ENCODE measurements at regions of chr12 and their contacts with region 1.

Region 1: GRCh38 chr12:503111-503761 is 43.5 kb downstream of the B4GALNT3 start:
- DNase-seq: no peak
- ATAC-seq: peak; percentile 47

Region 2: DNA sequence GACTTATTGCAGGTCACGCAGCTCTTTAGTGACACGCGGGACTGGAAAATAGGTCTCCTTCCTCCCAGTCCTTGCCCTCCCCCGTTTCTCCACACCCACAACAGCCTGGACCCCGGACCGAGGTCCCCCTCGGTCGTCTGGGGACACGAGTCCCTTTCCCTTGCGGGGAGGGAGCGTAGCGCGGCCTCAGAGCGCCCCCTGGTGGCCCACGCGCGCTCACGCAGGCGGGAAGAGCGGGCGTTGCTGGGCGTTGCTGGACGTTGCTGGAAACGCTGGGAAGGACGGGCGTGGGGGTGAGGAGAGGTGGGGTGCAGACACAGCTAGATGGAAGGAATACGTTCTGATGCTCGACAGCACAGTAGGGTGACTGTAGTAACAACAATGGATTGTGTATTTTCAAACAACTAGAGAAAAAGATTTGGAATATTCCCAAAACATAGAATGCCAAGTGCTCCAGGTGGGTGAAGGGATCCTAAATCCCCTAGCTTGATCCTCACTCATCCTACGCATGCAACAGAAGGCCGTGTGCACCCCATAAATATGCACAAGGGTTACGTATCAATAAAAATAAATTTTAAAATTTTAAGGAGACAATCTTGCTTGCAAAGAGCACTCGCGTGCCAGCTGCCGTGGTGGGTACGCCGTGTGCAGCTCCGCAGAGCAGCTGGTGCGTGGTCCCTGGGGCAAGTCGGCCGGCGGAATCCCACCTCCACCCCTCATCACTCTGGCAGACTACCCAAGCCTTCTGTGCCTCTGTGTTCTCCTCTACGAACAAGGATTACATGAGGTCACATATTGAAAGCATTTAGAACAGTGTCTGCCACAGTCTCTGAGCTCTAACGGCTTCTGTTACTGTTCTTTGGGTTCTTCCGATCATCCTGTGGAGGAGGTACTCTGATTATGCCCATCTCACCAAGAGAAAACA is 43.9 kb after region 1 on chr12:
- intact Hi-C with region 1: loop called (anchors 2 kb)
- DNase-seq: peak; percentile 85
- ATAC-seq: peak; percentile 42